ENCODE measurements at regions of chr1 and their contacts with region 1.

Region 1: DNA sequence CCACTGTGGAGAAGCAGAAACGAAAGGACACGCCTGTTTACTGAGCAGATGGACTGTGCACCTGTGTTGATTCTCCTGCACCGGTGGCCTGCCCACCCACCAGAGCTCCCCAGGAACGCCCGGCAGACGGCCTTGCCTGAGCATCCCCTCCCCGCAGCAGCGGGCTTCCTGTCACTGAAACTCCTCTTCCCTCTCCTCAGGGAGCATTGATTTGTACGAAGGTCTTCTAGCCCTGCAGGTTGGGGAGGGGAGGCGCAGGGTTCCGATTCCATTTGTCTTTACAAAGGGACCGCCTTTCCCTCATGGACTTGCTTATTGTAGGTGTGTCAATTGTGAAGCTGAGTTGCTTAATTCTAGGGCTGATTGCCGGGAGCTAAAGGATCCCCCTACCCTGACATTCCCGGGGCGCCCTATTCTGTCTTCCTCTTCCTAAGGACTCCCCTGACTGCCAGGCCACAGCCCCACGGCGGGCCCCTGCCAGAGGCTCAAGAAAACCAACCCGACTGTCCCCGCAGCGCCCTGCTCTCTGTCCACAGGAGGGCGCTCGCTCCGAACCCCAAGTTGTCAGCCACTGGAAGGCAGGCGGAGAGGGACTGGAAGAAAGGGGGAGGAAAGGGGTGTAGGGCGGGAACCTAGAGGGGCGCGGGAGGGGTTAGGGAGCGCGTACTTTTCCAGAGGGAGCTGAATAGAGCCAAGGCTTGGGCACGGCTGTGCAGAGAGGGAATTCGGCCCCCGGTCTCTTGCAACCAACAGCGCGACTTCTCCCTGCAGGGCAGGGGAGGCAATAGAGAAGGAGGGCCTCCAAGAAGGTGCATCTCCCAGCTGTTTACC is 2.8 kb downstream of the S100A6 start:
- DNase-seq: peak; percentile 81
- H3K4me3 Mint-ChIP-seq: peak overlapping the region; percentile 96
- H3K27ac Mint-ChIP-seq: peak overlapping the region; percentile 98
- H3K4me1 Mint-ChIP-seq: peaks cover 64% of the 10 kb centered on the region
- H3K27me3 Mint-ChIP-seq: no peaks in the 10 kb centered on the region

Region 2: DNA sequence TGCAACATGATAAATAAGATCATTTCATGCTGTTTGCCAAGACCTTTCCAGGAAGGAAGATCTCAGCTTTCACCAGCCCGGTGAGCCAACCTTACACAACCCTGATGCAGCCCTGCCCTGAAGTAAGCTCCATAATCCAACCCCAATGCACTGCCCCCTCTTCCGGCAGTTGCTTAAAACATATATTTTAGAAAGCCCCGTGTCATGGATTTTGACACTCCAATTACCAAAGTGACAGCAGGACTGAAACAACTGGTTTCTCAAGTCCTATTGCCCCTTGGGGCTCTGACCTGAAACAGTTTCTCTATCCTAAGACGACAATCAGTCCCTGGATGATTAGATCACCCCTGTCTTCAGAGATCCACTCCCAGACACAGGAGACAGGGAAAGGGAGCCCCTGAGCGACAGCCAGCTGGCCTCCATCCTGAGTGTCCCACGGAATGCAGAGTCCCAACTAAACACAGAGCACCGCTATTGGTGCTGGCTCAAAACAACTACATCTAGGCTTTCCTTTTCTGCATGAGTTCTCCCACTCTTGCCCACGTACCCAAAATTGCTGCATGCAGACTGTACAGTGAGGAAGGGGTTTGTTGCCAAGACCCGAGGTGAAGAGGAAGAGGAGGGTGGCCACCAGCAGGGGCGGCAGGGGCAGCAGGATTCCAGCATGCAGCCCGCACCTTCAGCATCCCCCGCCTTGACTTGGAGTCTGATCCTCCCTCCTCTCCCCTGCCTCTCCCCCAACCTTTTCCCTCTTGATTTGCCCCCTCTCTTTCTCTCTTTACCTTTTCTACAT is 167.5 kb before region 1 on chr1:
- CTCF ChIA-PET with region 1: no interaction called
- POLR2A ChIA-PET with region 1: no interaction called
- DNase-seq: no peak
- H3K4me3 Mint-ChIP-seq: no peak overlapping the region
- H3K27ac Mint-ChIP-seq: no peak overlapping the region
- H3K4me1 Mint-ChIP-seq: no peaks in the 10 kb centered on the region
- H3K27me3 Mint-ChIP-seq: peaks cover 7% of the 10 kb centered on the region

Region 3: DNA sequence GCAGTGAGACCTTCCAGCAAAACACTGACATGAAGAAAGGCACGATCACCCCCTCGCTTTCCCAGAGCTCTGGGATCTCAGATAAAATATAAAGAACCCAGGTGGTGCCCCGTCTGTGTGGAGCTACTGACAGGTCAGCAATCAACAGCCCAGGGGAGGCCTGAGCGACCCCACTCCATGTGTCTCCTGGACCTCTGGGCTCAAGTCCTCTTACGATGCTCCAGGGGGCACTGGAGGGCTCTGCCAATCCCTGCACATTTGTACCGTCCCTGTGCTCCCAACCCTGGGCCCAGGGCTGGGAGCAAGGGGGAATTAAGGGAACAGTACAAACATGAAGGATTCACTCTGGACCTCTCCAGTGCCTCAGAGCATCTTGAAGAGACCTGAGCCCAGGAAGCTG is 104.2 kb before region 1 on chr1:
- CTCF ChIA-PET with region 1: no interaction called
- POLR2A ChIA-PET with region 1: no interaction called
- DNase-seq: no peak
- H3K4me3 Mint-ChIP-seq: no peak overlapping the region
- H3K27ac Mint-ChIP-seq: no peak overlapping the region
- H3K4me1 Mint-ChIP-seq: no peaks in the 10 kb centered on the region
- H3K27me3 Mint-ChIP-seq: peaks cover 18% of the 10 kb centered on the region

Region 4: DNA sequence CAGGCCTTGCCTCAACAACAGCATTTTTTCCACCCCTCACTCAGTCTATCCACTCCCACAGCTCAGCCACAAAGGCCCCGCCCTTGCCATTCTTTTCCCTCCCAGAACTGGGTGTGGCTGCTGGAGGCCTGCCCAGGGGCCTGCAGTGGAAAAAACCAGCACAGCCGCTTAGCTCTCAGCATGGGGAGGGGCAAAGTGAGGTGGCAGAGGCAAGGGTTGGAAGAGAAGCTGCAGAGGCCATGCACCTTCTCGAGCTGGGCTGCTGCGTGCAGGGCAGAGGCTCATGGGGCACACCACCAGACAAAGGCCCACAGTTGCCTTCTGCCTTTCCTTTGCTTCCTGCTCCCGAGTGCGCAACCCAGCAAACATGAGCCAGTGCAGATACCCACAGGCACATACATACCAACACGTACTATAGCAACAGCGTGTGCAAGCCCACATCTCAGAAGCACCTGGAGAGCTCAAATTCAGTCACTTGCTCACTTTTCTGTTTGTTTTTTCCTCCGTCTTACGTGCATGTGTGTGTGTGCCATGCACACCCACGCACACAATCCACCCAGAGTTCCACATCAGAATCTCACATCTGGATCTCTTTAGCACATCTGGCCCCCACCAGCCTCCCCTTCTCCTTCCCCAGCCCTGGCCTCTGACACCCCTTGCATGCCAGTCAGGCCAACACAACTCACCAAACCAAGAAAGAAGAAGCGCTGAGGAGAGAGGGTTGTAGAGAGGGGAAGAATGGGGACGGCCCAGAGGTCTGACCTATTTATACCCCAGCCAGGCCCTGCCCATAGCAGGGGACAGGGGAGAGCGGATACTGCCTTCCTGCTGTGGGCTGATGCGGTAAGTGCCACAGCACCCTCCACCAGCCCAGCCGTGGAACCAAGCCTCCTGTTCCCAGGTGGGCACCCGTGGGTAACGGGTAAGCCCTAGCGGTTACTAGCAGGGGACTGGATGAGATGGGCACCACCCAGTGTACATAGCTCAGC is 12.4 kb after region 1 on chr1 and contains the start of gene S100A4:
- CTCF ChIA-PET with region 1: interaction called, 56 read pairs
- POLR2A ChIA-PET with region 1: interaction called, 12 read pairs
- DNase-seq: peak; percentile 97
- H3K4me3 Mint-ChIP-seq: peak within 1 kb of the TSS; percentile 91
- H3K27ac Mint-ChIP-seq: peak within 1 kb of the TSS; percentile 98
- H3K4me1 Mint-ChIP-seq: peaks cover 85% of the 10 kb centered on the region
- H3K27me3 Mint-ChIP-seq: no peaks in the 10 kb centered on the region
- total RNA-seq, gene S100A4: 678 to 905 TPM

Region 5: GRCh38 chr1:153561466-153561985 is 28.5 kb after region 1 on chr1:
- CTCF ChIA-PET with region 1: interaction called, 11 read pairs
- POLR2A ChIA-PET with region 1: interaction called, 5 read pairs
- DNase-seq: no peak
- H3K4me3 Mint-ChIP-seq: no peak overlapping the region
- H3K27ac Mint-ChIP-seq: peak overlapping the region; percentile 19
- H3K4me1 Mint-ChIP-seq: peaks cover 15% of the 10 kb centered on the region
- H3K27me3 Mint-ChIP-seq: no peaks in the 10 kb centered on the region

Region 6: DNA sequence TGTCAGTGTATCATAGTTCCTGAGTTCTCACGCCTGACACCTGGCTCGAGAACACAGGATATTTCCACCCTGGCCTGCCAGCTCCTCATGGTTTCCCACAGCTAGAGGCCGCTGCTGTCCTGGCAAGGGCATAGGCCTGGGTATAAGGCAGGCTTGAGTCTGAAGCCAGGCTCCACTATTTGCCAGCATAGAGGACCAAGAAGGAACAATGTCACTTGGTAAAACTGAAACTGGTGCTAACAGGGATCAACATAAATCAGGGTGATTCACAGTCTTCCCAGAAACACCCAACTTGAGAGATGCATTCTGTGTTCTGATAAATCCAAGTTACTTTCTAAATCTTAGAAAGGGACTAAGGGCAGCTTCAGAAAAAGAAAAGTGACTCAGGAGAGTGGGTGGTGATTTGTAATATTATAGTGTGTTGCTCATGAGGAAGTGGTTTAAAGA is 39.6 kb after region 1 on chr1:
- CTCF ChIA-PET with region 1: interaction called, 99 read pairs
- POLR2A ChIA-PET with region 1: interaction called, 6 read pairs
- DNase-seq: peak; percentile 68
- H3K4me3 Mint-ChIP-seq: no peak overlapping the region
- H3K27ac Mint-ChIP-seq: peak overlapping the region; percentile 32
- H3K4me1 Mint-ChIP-seq: peaks cover 38% of the 10 kb centered on the region
- H3K27me3 Mint-ChIP-seq: peaks cover 11% of the 10 kb centered on the region

Measured in activated CD4-positive, alpha-beta T cell treated with anti-CD3 and anti-CD28 coated beads, Interleukin-2, amount 10 ng/mL, durations not matched to agents 7 days and 5 days (primary cell).